HCT116 (cell line): ENCODE measurements at regions of chr20 and their contacts with region 1.

Region 1: DNA sequence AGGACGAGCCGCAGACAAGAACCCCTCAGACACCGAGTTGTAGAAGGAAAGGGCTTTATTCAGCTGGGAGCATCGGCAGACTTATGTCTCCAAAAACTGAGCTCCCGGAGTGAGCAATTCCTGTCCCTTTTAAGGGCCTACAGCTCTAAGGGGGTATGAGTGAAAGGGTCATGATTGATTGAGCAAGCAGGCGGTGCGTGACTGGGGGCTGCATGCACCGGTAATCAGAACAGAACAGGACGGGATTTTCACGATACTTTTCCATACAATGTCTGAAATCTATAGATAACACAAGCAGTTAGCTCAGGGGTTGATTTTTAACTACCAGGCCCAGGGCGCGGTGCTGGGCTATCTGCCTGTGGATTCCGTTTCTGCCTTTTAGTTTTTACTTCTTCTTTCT is 226.4 kb upstream of the PLCB4 start:
- DNase-seq: no peak
- ATAC-seq: no peak
- H3K4me3 ChIP-seq: no peak overlapping the region
- H3K27ac ChIP-seq: no peak overlapping the region
- H3K4me1 ChIP-seq: no peaks in the 10 kb centered on the region
- H3K27me3 ChIP-seq: no peaks in the 10 kb centered on the region
- CTCF ChIP-seq: no peak
- POLR2A ChIP-seq: no peak
- RAD21 ChIP-seq: no peak

Region 2: GRCh38 chr20:8815208-8815607 is 27.3 kb before region 1 on chr20:
- CTCF ChIA-PET with region 1: no interaction called
- POLR2A ChIA-PET with region 1: no interaction called
- RAD21 ChIA-PET with region 1: no interaction called
- intact Hi-C with region 1: loop called (anchors 1 kb)
- DNase-seq: no peak
- ATAC-seq: no peak
- H3K4me3 ChIP-seq: no peak overlapping the region
- H3K27ac ChIP-seq: no peak overlapping the region
- H3K4me1 ChIP-seq: no peaks in the 10 kb centered on the region
- H3K27me3 ChIP-seq: no peaks in the 10 kb centered on the region
- CTCF ChIP-seq: no peak
- POLR2A ChIP-seq: no peak
- RAD21 ChIP-seq: no peak

Region 3: DNA sequence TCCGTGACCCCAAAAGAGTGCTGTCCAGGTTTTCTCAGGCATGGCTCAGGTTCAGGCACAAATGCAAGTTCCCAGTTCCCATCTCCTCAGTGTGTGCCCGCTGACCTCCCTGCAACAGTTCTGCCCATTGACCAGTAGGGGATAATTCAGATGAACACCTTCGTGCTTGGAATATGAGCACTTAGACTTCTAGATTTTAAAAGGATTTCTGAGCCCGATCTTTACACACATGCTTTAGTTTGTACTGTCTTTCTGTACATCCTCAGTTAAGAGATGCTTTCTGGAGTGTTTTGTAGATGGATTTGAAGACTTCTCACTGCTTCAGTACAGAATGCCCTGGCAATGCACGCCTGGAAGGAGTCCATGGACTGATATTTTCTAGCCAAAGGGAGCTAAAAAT is 13.3 kb before region 1 on chr20:
- CTCF ChIA-PET with region 1: no interaction called
- POLR2A ChIA-PET with region 1: no interaction called
- RAD21 ChIA-PET with region 1: no interaction called
- intact Hi-C with region 1: no loop called
- DNase-seq: no peak
- ATAC-seq: peak; percentile 89
- H3K4me3 ChIP-seq: no peak overlapping the region
- H3K27ac ChIP-seq: no peak overlapping the region
- H3K4me1 ChIP-seq: no peaks in the 10 kb centered on the region
- H3K27me3 ChIP-seq: no peaks in the 10 kb centered on the region
- CTCF ChIP-seq: peak in 2 of 3 experiments; percentile 56 to 60; a peak in 4 of 6 replicates
- POLR2A ChIP-seq: no peak
- RAD21 ChIP-seq: no peak

Region 4: DNA sequence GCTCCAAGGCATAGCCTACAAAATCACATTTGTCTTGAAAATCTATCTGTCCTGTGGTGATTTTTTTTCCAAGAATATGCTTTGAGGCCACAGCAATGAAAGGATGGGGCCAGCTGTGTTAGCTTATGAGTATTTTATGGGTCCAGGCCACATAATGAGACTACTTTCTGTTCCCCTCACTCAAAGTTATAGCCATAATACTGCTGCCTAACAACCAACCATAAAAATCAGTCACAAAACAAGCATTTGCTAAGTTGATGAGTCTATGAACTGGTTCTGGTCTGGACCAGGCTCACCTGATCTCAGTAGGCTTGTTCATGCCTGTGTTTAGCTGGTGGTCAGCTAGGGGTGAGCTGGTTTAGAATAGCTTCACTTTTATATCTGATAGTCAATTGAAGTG is 33.8 kb after region 1 on chr20:
- CTCF ChIA-PET with region 1: no interaction called
- POLR2A ChIA-PET with region 1: no interaction called
- RAD21 ChIA-PET with region 1: no interaction called
- intact Hi-C with region 1: no loop called
- DNase-seq: no peak
- ATAC-seq: no peak
- H3K4me3 ChIP-seq: no peak overlapping the region
- H3K27ac ChIP-seq: no peak overlapping the region
- H3K4me1 ChIP-seq: no peaks in the 10 kb centered on the region
- H3K27me3 ChIP-seq: no peaks in the 10 kb centered on the region
- CTCF ChIP-seq: no peak
- POLR2A ChIP-seq: no peak
- RAD21 ChIP-seq: no peak